ENCODE measurements at regions of chr11 and their contacts with region 1.

Region 1: GRCh38 chr11:1453611-1454034 is 33.0 kb downstream of the MOB2 start:
- DNase-seq: peak in 4 of 6 donors; percentile 56 to 78 (median 65)
- ATAC-seq: peak in 3 of 4 donors; percentile 18 to 57 (median 55)
- H3K4me3 ChIP-seq: no peak overlapping the region
- H3K27ac ChIP-seq: no peak overlapping the region
- H3K4me1 ChIP-seq: no peaks in the 10 kb centered on the region
- H3K27me3 ChIP-seq: no peaks in the 10 kb centered on the region
- CTCF ChIP-seq: peak in 1 of 4 donors; percentile 12

Region 2: DNA sequence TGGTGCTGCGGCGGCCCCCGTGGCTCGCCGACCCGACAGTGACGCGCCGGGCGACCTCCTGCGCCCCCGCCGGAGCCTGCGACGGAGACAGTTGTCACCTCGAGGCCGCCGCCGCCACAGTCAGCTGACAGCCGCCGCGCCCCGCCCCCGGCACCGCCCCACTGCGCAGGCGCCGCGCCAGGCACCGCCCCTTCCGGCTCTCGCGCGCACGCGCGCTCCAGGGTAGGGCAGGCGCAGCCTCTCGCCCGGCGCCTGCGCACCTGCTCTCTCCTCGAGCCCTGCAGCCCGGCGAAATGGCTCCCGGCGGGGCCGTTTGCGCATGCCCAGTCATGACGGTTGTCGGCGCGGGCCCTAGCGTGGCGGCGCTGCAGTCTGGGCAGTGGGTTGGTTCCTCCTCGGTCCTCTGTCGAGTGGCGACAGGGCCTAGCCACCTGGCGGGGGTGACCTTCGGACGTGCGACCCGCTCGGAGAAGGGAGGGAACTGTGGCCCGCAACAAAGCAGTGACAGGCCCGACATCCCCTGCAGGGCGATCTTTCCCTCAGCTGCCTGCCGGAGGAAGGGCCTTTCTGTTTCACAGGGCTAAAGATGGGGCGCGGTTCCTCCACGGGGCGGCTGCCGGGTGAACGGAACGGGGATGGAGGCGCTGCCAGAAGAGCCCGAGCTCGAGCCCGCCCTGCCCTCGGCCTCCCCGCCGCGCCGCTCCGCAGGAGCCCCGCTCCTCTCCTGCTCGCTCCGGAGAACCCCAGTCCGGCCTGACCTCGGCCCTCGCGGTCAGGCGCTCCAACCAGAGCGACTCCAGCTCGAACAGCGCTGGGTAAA is 143.9 kb before region 1 on chr11 and contains the start of gene TOLLIP:
- intact Hi-C with region 1: no loop called
- DNase-seq: peak; percentile 94 to 99 (median 98)
- ATAC-seq: peak; percentile 89 to 93 (median 91)
- H3K4me3 ChIP-seq: peak within 1 kb of the TSS; percentile 66 to 95 (median 88)
- H3K27ac ChIP-seq: peak within 1 kb of the TSS; percentile 73 to 91 (median 90)
- H3K4me1 ChIP-seq: peaks cover 18 to 42% (median 30%) of the 10 kb centered on the region in 3 donors
- H3K27me3 ChIP-seq: no peaks in the 10 kb centered on the region
- CTCF ChIP-seq: no peak
- total RNA-seq, gene TOLLIP: 41.6 to 69.8 (median 54.0) TPM

Region 3: DNA sequence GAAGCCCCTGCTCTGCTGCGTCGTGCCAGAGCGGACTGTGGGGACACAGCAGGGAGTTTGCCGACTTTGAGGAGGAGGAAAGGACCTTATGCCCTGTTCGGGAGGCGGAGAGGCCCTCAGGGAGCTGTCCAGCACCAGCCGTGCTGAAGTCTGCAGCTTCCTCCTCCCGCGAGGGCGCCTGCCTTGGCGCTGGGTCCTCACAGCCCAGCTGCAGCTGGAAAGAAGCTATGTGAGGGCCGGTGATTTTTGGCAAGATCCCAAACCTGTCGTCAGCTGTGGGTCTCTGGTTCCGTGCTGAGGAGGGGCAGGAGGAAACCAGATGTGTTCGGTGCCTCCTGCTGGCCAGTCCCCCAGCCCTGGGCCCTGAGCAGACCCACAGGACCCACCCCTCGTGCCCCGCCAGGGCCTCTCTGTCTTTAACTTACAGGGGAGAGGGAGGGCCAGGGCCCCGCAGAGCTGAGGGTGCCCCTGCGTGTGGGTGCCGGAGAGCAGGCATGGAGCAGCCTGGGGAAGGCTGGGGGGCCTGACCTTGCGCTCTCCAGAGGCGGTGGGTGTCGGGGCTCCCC is 51.9 kb before region 1 on chr11:
- intact Hi-C with region 1: loop called in 1 of 3 experiments (anchors 5 kb)
- DNase-seq: peak; percentile 72 to 94 (median 86)
- ATAC-seq: peak; percentile 75 to 91 (median 84)
- H3K4me3 ChIP-seq: no peak overlapping the region
- H3K27ac ChIP-seq: no peak overlapping the region
- H3K4me1 ChIP-seq: peaks cover 0 to 5% (median 4%) of the 10 kb centered on the region in 3 donors
- H3K27me3 ChIP-seq: no peaks in the 10 kb centered on the region
- CTCF ChIP-seq: no peak